ENCODE measurements at regions of chr4 and their contacts with region 1.

Region 1: DNA sequence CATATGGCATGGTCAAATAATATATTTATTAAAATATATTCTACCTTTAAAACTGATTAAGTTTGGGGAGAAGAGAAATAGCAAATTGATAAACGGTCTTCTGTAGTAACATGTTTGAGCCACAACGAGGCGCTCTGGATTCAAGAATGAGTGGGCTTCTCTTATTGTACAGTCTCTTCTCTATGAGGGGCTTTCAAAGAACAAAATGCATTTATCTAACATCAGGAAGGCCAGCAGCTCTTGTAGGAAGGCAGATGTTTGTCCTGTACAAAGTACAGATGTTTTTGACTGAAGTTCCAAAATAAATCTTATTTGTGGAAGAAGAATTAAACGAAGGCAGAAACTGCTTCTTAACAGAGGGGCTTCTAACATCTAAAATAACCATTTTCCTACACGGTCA is 153.6 kb downstream of the RASL11B start:
- DNase-seq: peak; percentile 49
- ATAC-seq: no peak
- H3K4me3 Mint-ChIP-seq: no peak overlapping the region
- H3K27ac Mint-ChIP-seq: no peak overlapping the region
- H3K4me1 Mint-ChIP-seq: peaks cover 38% of the 10 kb centered on the region
- H3K27me3 Mint-ChIP-seq: no peaks in the 10 kb centered on the region

Region 2: GRCh38 chr4:52529983-52530382 is 485.7 kb before region 1 on chr4:
- CTCF ChIA-PET with region 1: no interaction called
- POLR2A ChIA-PET with region 1: no interaction called
- intact Hi-C with region 1: no loop called
- DNase-seq: no peak
- ATAC-seq: no peak
- H3K4me3 Mint-ChIP-seq: no peak overlapping the region
- H3K27ac Mint-ChIP-seq: no peak overlapping the region
- H3K4me1 Mint-ChIP-seq: no peaks in the 10 kb centered on the region
- H3K27me3 Mint-ChIP-seq: peaks cover 1% of the 10 kb centered on the region

Region 3: DNA sequence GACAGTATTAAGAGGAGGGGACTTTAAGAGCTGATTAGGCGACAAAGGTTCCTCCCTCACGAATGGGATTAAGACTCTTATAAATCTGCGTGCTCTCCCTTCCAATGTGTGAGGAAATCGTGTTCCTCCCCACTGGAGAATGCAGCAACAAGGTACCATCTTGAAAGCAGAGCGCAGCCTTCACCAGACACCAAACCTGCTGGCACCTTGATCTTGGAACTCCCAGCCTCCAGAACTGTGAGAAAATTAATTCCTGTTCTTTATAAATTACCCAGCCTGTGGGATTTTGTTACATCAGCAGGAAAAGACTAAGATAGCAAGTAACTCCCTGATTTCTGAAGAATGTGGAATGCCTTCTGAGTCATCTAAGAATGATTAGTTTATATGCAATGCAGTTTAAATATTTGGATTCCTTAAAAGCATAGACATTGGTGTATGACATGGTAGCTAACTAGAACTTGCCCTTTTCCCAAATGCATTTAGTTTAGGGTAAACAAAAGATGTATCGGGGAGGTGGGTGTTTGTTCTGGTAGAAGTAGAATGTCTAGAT is 442.7 kb before region 1 on chr4:
- CTCF ChIA-PET with region 1: no interaction called
- POLR2A ChIA-PET with region 1: no interaction called
- intact Hi-C with region 1: no loop called
- DNase-seq: no peak
- ATAC-seq: no peak
- H3K4me3 Mint-ChIP-seq: no peak overlapping the region
- H3K27ac Mint-ChIP-seq: no peak overlapping the region
- H3K4me1 Mint-ChIP-seq: peaks cover 2% of the 10 kb centered on the region
- H3K27me3 Mint-ChIP-seq: peaks cover 12% of the 10 kb centered on the region

Region 4: DNA sequence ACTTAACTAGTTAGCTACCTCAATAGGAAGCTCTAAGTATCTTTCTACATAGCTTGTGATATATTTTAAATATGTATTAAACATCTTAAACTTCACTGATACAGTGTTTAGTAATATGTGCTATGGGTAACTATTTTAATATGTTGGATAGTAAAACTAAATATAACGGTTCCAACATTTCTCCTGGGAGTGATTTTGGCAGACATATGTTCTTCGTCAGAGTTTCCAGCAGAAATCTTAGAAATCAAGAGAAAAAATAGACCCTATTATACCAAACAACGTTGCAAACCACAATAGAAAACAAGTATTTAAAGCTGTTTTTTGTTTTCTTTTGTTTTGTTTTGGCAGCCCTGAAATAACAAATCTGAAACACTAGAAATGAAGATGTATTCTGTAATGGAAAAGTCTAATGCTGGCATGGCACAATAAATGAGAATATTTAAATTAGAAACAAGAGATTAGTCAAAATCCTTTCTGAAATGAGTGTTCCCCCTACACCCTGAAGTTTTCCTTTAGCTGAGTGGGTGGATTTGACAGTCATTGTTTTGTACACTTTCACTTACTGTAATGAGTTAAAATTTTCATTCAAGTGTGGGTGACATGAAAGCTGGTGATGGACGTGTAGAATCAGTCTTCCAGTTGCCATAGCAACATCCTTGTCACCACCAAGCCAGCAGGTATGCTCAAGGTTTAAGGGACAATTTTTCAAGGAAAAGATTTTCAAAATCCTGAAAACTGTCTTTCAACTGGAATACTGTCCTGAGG is 116.6 kb after region 1 on chr4:
- CTCF ChIA-PET with region 1: interaction called, 4 read pairs
- POLR2A ChIA-PET with region 1: no interaction called
- intact Hi-C with region 1: loop called in 1 of 2 experiments (anchors 10 kb)
- DNase-seq: peak; percentile 49
- ATAC-seq: peak; percentile 83
- H3K4me3 Mint-ChIP-seq: no peak overlapping the region
- H3K27ac Mint-ChIP-seq: peak overlapping the region; percentile 88
- H3K4me1 Mint-ChIP-seq: peaks cover 34% of the 10 kb centered on the region
- H3K27me3 Mint-ChIP-seq: no peaks in the 10 kb centered on the region

Region 5: DNA sequence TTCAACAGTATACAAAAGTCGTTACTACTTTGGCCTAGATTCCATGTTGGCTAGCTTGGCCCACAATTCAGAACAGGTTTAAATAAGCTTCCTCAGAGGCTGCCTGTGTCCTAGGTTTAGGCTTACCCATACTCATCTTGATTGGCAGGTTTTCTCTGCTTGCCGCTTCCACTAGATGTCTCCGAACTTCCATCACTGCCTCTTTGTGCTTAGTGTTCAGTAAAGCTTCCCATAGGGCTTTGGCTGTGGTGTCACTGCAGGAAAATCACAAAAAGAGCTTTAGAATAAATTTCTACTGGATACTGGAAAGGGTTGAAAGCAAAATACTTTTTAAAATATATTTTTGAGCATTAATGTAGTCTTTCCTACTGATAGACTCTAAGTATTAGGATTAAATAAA is 297.8 kb after region 1 on chr4:
- CTCF ChIA-PET with region 1: interaction called, 3 read pairs
- POLR2A ChIA-PET with region 1: no interaction called
- intact Hi-C with region 1: loop called in 1 of 2 experiments (anchors 10 kb)
- DNase-seq: no peak
- ATAC-seq: no peak
- H3K4me3 Mint-ChIP-seq: no peak overlapping the region
- H3K27ac Mint-ChIP-seq: no peak overlapping the region
- H3K4me1 Mint-ChIP-seq: peaks cover 26% of the 10 kb centered on the region
- H3K27me3 Mint-ChIP-seq: no peaks in the 10 kb centered on the region

Region 6: DNA sequence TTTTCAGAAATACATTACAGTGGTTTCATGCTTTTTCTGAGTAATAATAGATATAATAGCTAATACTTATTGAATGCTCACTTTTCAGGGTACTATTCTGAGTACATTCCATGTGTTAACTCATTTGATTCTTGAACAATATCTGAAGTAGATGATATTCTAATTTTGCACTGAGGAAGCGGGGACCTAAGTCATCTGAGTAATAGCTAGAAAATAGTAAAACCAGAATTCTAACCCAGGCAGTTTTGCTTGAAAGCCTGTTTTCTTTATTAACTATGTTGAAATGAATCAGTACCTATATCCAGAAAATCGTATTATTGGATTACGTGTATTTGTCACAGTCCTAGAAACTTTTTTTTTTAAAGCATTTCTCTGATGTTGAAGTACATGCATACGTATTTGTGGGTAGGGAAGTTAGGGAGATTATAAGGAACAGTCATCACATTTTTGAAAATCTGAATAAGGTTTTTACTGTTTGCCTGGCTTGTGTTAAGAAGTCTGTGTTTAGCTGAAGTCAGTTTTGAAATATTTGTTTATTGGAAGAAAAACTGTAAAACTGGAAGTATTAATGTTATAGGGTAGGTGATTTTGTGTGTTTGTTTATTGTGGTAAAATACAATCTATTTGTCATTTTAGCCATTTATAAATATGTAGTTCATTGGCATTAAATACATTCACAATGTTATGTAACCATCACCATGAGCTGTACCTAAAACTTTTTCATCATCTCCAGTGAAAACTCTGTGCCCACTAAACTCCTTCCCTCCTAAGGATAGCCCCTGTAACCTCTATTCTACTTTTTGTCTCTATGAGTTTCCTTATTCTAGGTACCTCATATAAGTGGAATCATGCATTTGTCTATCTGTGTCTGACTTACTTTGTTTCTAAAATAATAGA is 417.1 kb after region 1 on chr4:
- CTCF ChIA-PET with region 1: no interaction called
- POLR2A ChIA-PET with region 1: no interaction called
- intact Hi-C with region 1: loop called in 1 of 2 experiments (anchors 10 kb)
- DNase-seq: no peak
- ATAC-seq: peak; percentile 81
- H3K4me3 Mint-ChIP-seq: no peak overlapping the region
- H3K27ac Mint-ChIP-seq: no peak overlapping the region
- H3K4me1 Mint-ChIP-seq: peaks cover 26% of the 10 kb centered on the region
- H3K27me3 Mint-ChIP-seq: no peaks in the 10 kb centered on the region

Region 7: DNA sequence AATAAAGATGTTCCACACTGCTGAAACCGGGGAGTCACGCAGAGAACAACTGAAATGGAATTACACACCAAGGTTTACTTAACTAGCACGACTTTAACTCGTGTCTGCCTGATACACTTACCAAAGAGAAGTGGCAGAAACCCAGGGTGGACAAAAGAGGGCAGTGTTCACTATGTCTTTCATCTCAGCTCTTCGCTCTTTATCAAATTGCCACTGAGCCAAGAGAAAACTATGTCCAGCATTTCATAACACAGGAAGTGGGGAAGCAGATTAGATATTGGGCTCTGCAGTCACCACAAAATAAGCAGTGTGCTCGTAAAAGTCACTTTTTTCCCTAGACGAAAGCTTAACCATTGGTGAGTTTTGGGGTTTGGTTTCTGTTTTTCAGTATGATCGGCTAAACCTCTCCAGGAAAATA is 893.0 kb after region 1 on chr4:
- CTCF ChIA-PET with region 1: no interaction called
- POLR2A ChIA-PET with region 1: no interaction called
- intact Hi-C with region 1: loop called in 1 of 2 experiments (anchors 10 kb)
- DNase-seq: no peak
- ATAC-seq: peak; percentile 60
- H3K4me3 Mint-ChIP-seq: no peak overlapping the region
- H3K27ac Mint-ChIP-seq: no peak overlapping the region
- H3K4me1 Mint-ChIP-seq: peaks cover 13% of the 10 kb centered on the region
- H3K27me3 Mint-ChIP-seq: peaks cover 45% of the 10 kb centered on the region